A549 (cell line): ENCODE measurements at regions of chr3 and their contacts with region 1.

Region 1: GRCh38 chr3:46866720-46867549 is 3.7 kb upstream of the MYL3 start:
- DNase-seq: peak; percentile 28 to 51
- ATAC-seq: peak; percentile 57 to 86; a peak in 3 of 6 replicates
- H3K4me3 ChIP-seq: no peak overlapping the region
- H3K27ac ChIP-seq: no peak overlapping the region
- H3K4me1 ChIP-seq: no peaks in the 10 kb centered on the region
- CTCF ChIP-seq: peak; percentile 75
- EP300 ChIP-seq: no peak
- POLR2A ChIP-seq: no peak
- RAD21 ChIP-seq: peak; percentile 68 to 74

Region 2: DNA sequence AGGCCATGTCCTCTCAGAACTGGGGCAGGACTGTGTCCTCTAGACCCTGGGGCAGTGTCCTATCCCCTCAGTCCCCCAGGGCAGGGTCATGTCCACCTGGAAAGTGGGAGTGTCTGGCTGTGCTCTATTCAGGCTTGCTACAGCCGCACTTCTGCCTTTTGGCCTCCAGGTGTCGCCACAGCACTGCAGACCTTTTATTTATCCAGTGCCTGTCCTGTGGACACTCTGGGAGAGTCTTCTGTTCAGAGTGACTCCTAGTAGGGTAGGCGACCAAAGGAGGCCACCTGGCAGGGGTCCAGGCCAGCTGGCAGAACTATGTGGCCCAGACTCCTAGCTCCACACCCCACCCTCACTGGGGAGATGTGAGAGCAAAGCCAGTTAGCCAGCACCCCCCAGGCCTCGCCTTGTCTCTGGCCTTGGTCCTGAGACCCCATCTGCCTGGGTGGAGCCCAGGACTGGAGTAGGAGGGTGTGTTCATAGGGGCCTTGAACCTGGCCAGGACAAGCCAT is 161.9 kb before region 1 on chr3:
- CTCF ChIA-PET with region 1: interaction called, 10 read pairs
- POLR2A ChIA-PET with region 1: no interaction called
- DNase-seq: peak; percentile 51 to 64
- ATAC-seq: peak; percentile 76 to 94
- H3K4me3 ChIP-seq: no peak overlapping the region
- H3K27ac ChIP-seq: no peak overlapping the region
- H3K4me1 ChIP-seq: no peaks in the 10 kb centered on the region
- CTCF ChIP-seq: peak; percentile 79
- EP300 ChIP-seq: no peak
- POLR2A ChIP-seq: no peak
- RAD21 ChIP-seq: peak; percentile 88 to 90

Region 3: GRCh38 chr3:46882377-46883053 is 15.6 kb after region 1 on chr3:
- CTCF ChIA-PET with region 1: interaction called, 45 read pairs
- POLR2A ChIA-PET with region 1: no interaction called
- DNase-seq: peak in 1 of 2 experiments; percentile 16
- ATAC-seq: peak; percentile 33 to 71; a peak in 4 of 6 replicates
- H3K4me3 ChIP-seq: peak overlapping the region; percentile 56
- H3K27ac ChIP-seq: peak overlapping the region; percentile 37 to 76; a peak in 4 of 6 replicates
- H3K4me1 ChIP-seq: peaks cover 21% of the 10 kb centered on the region
- CTCF ChIP-seq: no peak
- EP300 ChIP-seq: no peak
- POLR2A ChIP-seq: no peak
- RAD21 ChIP-seq: no peak

Region 4: GRCh38 chr3:46895204-46895660 is 28.3 kb after region 1 on chr3:
- CTCF ChIA-PET with region 1: interaction called, 27 read pairs
- POLR2A ChIA-PET with region 1: interaction called, 10 read pairs
- DNase-seq: peak; percentile 53 to 58
- ATAC-seq: peak; percentile 48 to 72; a peak in 5 of 6 replicates
- H3K4me3 ChIP-seq: no peak overlapping the region
- H3K27ac ChIP-seq: no peak overlapping the region
- H3K4me1 ChIP-seq: peaks cover 9% of the 10 kb centered on the region; the same call in 1 of the 3 replicates
- CTCF ChIP-seq: peak; percentile 67
- EP300 ChIP-seq: no peak
- POLR2A ChIP-seq: no peak
- RAD21 ChIP-seq: peak; percentile 62 to 75

Region 5: DNA sequence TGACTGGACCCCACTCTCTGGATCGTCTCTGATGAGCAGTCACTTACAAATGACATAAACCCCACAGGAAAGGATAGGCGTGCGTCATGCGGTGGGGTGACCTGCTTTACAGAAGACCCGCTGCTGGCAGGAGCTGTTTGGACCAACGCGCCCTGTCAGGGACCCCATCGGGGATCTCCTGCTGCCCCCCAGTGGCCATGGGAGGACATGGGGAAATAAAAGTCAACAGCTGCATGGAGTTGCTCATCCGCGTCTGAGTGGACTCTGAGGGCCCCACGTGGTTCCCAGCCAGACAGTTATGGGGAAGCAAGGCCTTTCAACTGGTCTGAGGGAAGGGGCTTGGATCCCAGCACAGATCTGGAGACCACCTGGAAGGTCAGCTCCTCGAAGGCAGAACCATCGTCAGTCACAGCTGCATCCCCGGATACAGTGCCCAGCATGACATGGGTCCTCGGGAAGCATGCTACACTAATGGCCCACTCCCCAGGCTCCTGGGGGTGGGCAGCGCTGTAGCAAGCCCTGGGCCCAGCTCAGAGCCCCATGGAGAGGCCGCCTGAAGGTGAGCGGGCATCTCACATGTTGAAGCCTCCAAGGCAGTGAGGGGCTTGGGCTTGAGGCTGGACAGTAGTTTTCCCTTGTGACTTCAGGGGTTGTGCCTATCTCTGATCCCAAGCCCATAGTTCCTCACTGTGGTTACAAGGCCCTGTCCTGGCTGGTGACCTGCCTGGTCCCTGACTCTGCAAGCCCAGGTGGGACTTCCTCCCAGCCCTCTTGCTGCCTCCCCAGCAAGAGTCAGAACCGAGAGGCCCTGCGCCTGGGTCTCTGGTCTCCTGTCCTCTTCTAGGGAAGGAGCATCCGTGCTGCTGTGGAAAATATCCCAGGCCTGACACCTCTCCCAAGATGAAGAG is 42.9 kb after region 1 on chr3:
- CTCF ChIA-PET with region 1: interaction called, 14 read pairs
- POLR2A ChIA-PET with region 1: no interaction called
- DNase-seq: peak; percentile 70 to 88
- ATAC-seq: peak; percentile 73 to 88
- H3K4me3 ChIP-seq: no peak overlapping the region
- H3K27ac ChIP-seq: peak overlapping the region; percentile 53 to 76; a peak in 5 of 6 replicates
- H3K4me1 ChIP-seq: peaks cover 17% of the 10 kb centered on the region
- CTCF ChIP-seq: peak; percentile 72
- EP300 ChIP-seq: no peak
- POLR2A ChIP-seq: no peak
- RAD21 ChIP-seq: peak; percentile 72 to 79